Activated CD4-positive, alpha-beta T cell treated with anti-CD3 and anti-CD28 coated beads for 36 hours (primary cell): ENCODE measurements at regions of chr1 and their contacts with region 1.

Region 1: GRCh38 chr1:152533327-152533938 is 19.2 kb downstream of the CRCT1 start:
- DNase-seq: peak; percentile 68
- ATAC-seq: no peak
- H3K4me3 Mint-ChIP-seq: no peak overlapping the region
- H3K27ac Mint-ChIP-seq: no peak overlapping the region
- H3K4me1 Mint-ChIP-seq: no peaks in the 10 kb centered on the region
- H3K27me3 Mint-ChIP-seq: peaks cover 43% of the 10 kb centered on the region

Region 2: DNA sequence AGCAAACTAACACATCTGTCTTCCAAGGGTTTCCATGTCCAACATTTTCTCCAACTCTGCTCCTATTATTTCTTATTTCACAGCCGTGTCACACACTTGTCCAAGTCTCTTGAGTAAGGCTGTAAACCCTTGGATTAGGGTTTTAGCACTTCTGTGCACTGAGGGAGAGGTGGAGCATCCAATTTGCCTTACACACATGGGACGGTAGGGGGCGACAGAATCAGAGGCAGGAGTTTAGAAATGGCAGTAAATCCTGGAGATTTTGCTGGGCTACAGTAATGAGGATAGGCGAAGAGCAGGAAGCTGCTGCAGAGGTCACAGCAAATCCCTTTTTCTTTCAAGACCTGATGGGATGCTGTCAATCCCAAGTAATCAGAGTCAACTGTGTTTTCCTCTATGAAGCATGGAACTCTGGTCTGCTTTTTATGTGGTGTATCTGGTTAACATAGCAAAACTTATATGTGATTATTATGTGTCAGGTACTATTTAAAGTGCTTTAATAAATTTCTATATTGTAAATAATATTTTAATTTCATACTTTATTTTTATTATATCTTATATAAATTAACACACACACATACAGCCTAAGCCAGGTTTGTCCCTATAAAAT is 38.3 kb before region 1 on chr1:
- CTCF ChIA-PET with region 1: interaction called, 7 read pairs
- POLR2A ChIA-PET with region 1: no interaction called
- intact Hi-C with region 1: loop called in 1 of 2 experiments (anchors 1 kb)
- DNase-seq: peak; percentile 71
- ATAC-seq: peak; percentile 53
- H3K4me3 Mint-ChIP-seq: no peak overlapping the region
- H3K27ac Mint-ChIP-seq: no peak overlapping the region
- H3K4me1 Mint-ChIP-seq: no peaks in the 10 kb centered on the region
- H3K27me3 Mint-ChIP-seq: peaks cover 10% of the 10 kb centered on the region